Activated T-helper 1 cell treated with anti-CD3 and anti-CD28 coated beads, Interleukin-12 subunit alpha, Interleukin-12 subunit beta, Interleukin-2, Interleukin-4 antibody, amounts not matched to agents 30 ng/mL and 10 ng/mL and 1 ng/mL, durations not matched to agents 14 hours and 24 hours and 36 hours (primary cell): ENCODE measurements at regions of chr3 and their contacts with region 1.

Region 1: GRCh38 chr3:143972505-143973255 is 1.1 kb downstream of the DIPK2A start:
- DNase-seq: peak; percentile 66
- H3K4me3 Mint-ChIP-seq: peak overlapping the region; percentile 88
- H3K27ac Mint-ChIP-seq: peak overlapping the region; percentile 89
- H3K4me1 Mint-ChIP-seq: peaks cover 33% of the 10 kb centered on the region
- H3K27me3 Mint-ChIP-seq: peaks cover 20% of the 10 kb centered on the region

Region 2: GRCh38 chr3:142028243-142028777 is 1944.4 kb before region 1 on chr3:
- intact Hi-C with region 1: loop called (anchors 5 kb)
- DNase-seq: peak; percentile 22
- H3K4me3 Mint-ChIP-seq: peak overlapping the region; percentile 87
- H3K27ac Mint-ChIP-seq: peak overlapping the region; percentile 49
- H3K4me1 Mint-ChIP-seq: peaks cover 18% of the 10 kb centered on the region
- H3K27me3 Mint-ChIP-seq: no peaks in the 10 kb centered on the region

Region 3: GRCh38 chr3:143001369-143002082 is 971.2 kb before region 1 on chr3 and contains the start of gene U2SURP:
- intact Hi-C with region 1: loop called (anchors 1 kb)
- DNase-seq: peak; percentile 91
- H3K4me3 Mint-ChIP-seq: peak within 1 kb of the TSS; percentile 95
- H3K27ac Mint-ChIP-seq: peak within 1 kb of the TSS; percentile 96
- H3K4me1 Mint-ChIP-seq: peaks cover 45% of the 10 kb centered on the region
- H3K27me3 Mint-ChIP-seq: peaks cover 6% of the 10 kb centered on the region
- total RNA-seq, gene U2SURP: 186 and 205 TPM in 2 replicates

Region 4: GRCh38 chr3:143775459-143775858 is 197.2 kb before region 1 on chr3:
- intact Hi-C with region 1: loop called (anchors 1 kb)
- DNase-seq: no peak
- H3K4me3 Mint-ChIP-seq: no peak overlapping the region
- H3K27ac Mint-ChIP-seq: no peak overlapping the region
- H3K4me1 Mint-ChIP-seq: peaks cover 8% of the 10 kb centered on the region
- H3K27me3 Mint-ChIP-seq: peaks cover 2% of the 10 kb centered on the region

Region 5: DNA sequence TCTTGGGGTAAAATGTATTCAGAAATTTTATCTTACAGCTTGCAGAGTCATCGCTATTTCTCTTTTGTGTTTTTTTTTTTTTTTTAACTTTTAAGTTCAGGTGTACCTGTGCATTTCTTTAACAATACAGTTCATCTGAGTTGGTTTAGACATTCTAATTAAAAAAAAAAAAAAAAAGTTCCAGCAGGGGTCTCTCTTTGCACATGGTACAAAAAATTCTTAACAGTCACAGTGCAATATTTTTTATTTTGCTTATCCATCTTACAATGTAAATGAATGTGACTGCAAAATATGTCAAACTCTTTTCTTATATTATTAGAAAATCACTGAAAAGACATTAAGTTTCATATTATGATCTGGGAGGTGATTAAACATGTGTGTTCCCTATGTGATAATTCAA is 76.9 kb before region 1 on chr3:
- intact Hi-C with region 1: no loop called
- DNase-seq: no peak
- H3K4me3 Mint-ChIP-seq: no peak overlapping the region
- H3K27ac Mint-ChIP-seq: no peak overlapping the region
- H3K4me1 Mint-ChIP-seq: no peaks in the 10 kb centered on the region
- H3K27me3 Mint-ChIP-seq: peaks cover 11% of the 10 kb centered on the region

Region 6: DNA sequence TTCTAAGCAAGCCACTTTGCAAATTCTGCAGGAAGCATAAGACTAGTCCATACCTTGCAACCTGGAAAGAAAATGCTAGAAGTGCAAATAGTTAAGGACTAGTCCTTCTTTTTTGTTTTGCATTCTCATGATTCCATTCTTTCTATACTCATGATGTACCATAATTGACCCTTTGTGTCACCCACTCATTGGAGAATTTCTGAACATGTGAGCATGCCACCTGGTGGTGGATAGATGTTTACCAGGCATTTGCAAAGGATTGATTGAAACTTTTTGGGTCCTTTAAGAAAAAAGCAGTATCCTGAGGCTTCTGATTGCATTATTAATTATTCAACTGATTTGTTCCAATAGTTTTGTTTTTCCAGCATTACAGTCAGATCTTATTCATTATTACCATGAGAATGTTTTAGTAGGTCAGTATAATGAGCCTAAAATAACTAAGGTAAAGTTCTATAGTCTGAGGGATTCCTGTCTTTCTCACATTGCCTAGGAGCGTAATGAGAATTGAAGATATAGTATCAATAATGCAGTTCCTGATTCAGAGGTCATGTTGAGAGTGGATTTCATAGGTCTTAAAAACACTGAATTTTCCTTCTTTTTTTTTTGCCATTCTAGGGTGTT is 21.2 kb before region 1 on chr3:
- intact Hi-C with region 1: loop called (anchors 1 kb)
- DNase-seq: no peak
- H3K4me3 Mint-ChIP-seq: no peak overlapping the region
- H3K27ac Mint-ChIP-seq: no peak overlapping the region
- H3K4me1 Mint-ChIP-seq: no peaks in the 10 kb centered on the region
- H3K27me3 Mint-ChIP-seq: peaks cover 25% of the 10 kb centered on the region

Region 7: DNA sequence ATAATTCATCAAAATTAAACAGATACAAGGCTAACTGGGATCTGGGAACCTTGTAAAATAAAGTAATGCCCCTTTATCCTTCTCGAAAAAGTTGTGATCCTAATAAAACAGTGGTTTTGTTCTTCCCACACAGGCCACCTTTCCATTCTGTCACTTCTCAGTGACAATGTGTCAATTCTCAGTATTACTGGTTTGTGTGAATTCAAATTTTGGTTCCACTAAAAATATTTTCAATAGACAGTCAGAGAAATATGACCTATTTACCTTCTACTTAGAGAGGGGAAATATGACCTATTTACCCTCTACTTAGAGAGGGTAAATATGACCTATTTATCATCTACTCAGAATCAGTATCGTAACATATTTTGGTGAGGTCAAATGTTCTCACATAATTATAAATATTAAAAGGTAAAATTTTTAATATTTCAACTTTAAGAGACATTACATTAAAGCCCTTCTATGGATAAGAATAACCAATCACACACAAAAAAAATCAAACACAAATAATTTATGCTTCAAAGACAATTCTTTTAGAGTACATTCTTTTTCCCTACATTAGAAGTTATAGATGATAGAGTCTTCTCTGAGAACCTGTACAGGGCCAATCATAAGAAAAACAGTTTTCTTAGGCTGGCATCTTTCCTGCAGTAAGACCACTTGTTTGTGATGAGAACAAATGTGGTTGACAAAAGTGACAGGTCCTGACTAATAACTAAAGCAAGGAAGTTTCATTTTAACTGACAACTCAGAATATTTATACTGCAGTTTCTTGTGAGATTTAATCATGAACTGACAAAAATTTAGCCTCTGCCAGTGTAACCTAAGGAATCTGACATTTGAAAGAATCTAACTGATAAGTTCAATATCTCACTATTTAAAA is 322.2 kb after region 1 on chr3:
- intact Hi-C with region 1: loop called (anchors 5 kb)
- DNase-seq: no peak
- H3K4me3 Mint-ChIP-seq: no peak overlapping the region
- H3K27ac Mint-ChIP-seq: no peak overlapping the region
- H3K4me1 Mint-ChIP-seq: peaks cover 16% of the 10 kb centered on the region
- H3K27me3 Mint-ChIP-seq: peaks cover 5% of the 10 kb centered on the region

Region 8: DNA sequence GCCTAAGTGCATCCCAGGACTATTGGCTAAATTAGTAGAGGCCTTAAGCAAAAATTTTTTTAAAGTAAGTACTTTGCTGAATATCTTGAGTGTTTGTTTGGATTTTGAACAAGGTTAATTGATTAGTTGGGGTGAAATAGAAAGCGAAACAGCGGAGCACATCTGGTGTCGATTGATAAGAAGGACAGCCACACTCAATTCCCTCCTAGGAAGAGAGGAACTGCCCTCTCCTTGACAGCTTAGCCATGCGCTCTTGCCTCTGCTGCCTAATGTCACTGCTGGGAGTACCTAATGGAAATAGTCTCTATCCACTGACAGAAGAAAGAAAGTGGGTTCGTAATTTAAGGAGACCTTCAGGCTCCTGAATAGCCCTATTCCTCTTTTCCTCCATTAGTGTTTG is 942.5 kb after region 1 on chr3:
- intact Hi-C with region 1: no loop called
- DNase-seq: no peak
- H3K4me3 Mint-ChIP-seq: no peak overlapping the region
- H3K27ac Mint-ChIP-seq: no peak overlapping the region
- H3K4me1 Mint-ChIP-seq: no peaks in the 10 kb centered on the region
- H3K27me3 Mint-ChIP-seq: no peaks in the 10 kb centered on the region